ENCODE measurements at regions of chr2 and their contacts with region 1.

Region 1: GRCh38 chr2:203578759-203579643 is 43.9 kb upstream of the RAPH1 start:
- DNase-seq: peak; percentile 54
- H3K4me3 Mint-ChIP-seq: no peak overlapping the region
- H3K27ac Mint-ChIP-seq: peak overlapping the region; percentile 67
- H3K4me1 Mint-ChIP-seq: peaks cover 38% of the 10 kb centered on the region
- H3K27me3 Mint-ChIP-seq: peaks cover 41% of the 10 kb centered on the region

Region 2: GRCh38 chr2:203492965-203493364 is 86.0 kb before region 1 on chr2:
- intact Hi-C with region 1: loop called (anchors 2 kb)
- DNase-seq: no peak
- H3K4me3 Mint-ChIP-seq: no peak overlapping the region
- H3K27ac Mint-ChIP-seq: no peak overlapping the region
- H3K4me1 Mint-ChIP-seq: peaks cover 17% of the 10 kb centered on the region
- H3K27me3 Mint-ChIP-seq: no peaks in the 10 kb centered on the region

Region 3: GRCh38 chr2:203549406-203549805 is 29.6 kb before region 1 on chr2:
- intact Hi-C with region 1: no loop called
- DNase-seq: no peak
- H3K4me3 Mint-ChIP-seq: no peak overlapping the region
- H3K27ac Mint-ChIP-seq: no peak overlapping the region
- H3K4me1 Mint-ChIP-seq: peaks cover 11% of the 10 kb centered on the region
- H3K27me3 Mint-ChIP-seq: peaks cover 13% of the 10 kb centered on the region

Region 4: GRCh38 chr2:203599509-203599908 is 20.5 kb after region 1 on chr2:
- intact Hi-C with region 1: loop called (anchors 1 kb)
- DNase-seq: no peak
- H3K4me3 Mint-ChIP-seq: no peak overlapping the region
- H3K27ac Mint-ChIP-seq: no peak overlapping the region
- H3K4me1 Mint-ChIP-seq: peaks cover 35% of the 10 kb centered on the region
- H3K27me3 Mint-ChIP-seq: peaks cover 51% of the 10 kb centered on the region

Region 5: DNA sequence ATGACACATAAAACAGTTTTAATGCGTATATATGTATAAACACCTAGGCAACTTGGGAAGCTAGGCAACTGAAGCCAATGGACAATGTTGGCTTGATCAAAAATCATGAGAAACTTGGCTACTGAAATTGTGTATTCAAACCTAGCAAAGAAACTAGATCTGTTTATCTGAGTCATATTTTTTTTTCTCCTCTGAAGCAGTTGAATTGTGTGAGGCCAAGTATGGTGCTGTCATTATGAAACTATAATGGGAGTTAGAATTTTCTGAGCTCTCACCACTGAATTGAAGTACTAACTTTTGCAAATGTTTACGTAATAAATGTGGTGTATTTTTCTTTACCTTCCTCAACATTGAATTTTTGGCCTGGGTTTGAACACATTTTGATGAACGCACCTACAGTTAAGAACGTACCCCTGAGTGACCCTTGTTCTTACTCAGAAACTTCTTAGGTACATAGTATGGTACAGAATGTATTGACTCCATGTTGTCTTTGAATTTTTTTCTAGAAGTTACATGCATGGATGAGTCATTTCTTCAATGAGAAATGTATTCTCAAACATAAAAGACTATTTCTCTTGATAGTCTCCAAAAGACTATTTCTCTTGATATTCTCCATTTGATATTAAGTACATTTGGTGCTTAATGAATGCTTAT is 151.2 kb after region 1 on chr2:
- intact Hi-C with region 1: loop called (anchors 1 kb)
- DNase-seq: no peak
- H3K4me3 Mint-ChIP-seq: peak overlapping the region; percentile 1
- H3K27ac Mint-ChIP-seq: peak overlapping the region; percentile 83
- H3K4me1 Mint-ChIP-seq: peaks cover 75% of the 10 kb centered on the region
- H3K27me3 Mint-ChIP-seq: no peaks in the 10 kb centered on the region

Measured in activated T-helper 2 cell treated with anti-CD3 and anti-CD28 coated beads, Interferon-gamma antibody, Interleukin-2, Interleukin-4, amounts not matched to agents 10 μg/mL and 5 μg/mL and 100 μg/mL, durations not matched to agents 14 hours and 24 hours and 36 hours (primary cell).